H1 (cell line): ENCODE measurements at regions of chr20 and their contacts with region 1.

Region 1: GRCh38 chr20:18019070-18019469 is 38.6 kb downstream of the OVOL2 start:
- DNase-seq: no peak
- H3K4me3 ChIP-seq: no peak overlapping the region
- H3K27ac ChIP-seq: no peak overlapping the region
- H3K4me1 ChIP-seq: no peaks in the 10 kb centered on the region
- H3K27me3 ChIP-seq: no peaks in the 10 kb centered on the region
- CTCF ChIP-seq: peak; percentile 69 to 94 (median 78)
- EP300 ChIP-seq: no peak
- POLR2A ChIP-seq: no peak
- RAD21 ChIP-seq: peak; percentile 67 to 82

Region 2: GRCh38 chr20:18032977-18033892 is 14.2 kb after region 1 on chr20:
- CTCF ChIA-PET with region 1: interaction called, 48 read pairs
- POLR2A ChIA-PET with region 1: interaction called, 3 read pairs
- DNase-seq: no peak
- H3K4me3 ChIP-seq: no peak overlapping the region
- H3K27ac ChIP-seq: no peak overlapping the region
- H3K4me1 ChIP-seq: peaks cover 0 to 5% (median under 1%) of the 10 kb centered on the region in 4 experiments; a peak in 3 of 7 replicates
- H3K27me3 ChIP-seq: no peaks in the 10 kb centered on the region
- CTCF ChIP-seq: peak; percentile 23 to 39 (median 32); a peak in 3 of 4 replicates
- EP300 ChIP-seq: no peak
- POLR2A ChIP-seq: no peak
- RAD21 ChIP-seq: peak; percentile 31; a peak in 3 of 4 replicates

Region 3: DNA sequence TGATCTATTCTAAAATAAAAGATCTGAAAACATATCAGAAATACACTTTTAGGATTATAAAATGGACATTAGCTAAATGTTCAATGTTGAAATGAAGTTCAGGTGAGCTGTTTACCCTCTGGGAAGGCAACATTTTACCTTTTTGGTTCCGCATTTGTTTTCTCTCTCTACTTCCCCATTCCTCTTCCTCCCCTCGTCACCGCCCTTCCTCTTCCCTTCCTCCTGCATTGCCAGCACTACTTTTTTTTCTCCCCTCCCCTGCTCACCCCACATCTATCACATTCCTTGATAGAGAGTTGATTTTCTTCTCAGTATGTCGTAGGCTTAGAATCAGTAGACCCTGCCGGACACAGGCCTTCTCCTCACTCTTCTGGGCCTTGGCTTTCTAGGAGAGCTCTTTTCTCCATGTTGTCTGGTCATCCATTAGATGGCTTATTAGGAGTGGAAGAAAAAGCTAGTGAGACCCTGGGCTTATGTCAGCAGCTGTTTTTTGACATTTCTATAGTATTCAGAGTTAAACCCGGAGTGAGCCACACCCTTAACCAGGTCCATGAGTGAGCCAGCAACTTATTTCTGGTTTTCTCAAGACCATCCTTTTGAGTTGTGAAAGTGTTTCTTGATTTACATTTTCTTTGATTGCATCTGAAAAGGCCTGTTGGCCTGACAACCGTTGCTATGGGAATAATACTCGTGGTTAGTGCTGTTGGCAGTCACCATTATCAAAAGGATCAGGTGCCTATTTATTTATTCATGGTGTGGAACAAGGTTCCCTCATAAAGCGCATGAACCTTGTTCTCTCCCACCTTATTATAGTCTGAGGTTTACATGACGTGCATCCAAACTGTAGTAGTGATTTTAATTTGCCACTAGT is 659.7 kb after region 1 on chr20:
- CTCF ChIA-PET with region 1: no interaction called
- POLR2A ChIA-PET with region 1: no interaction called
- DNase-seq: peak in 1 of 2 experiments; percentile 48
- H3K4me3 ChIP-seq: no peak overlapping the region
- H3K27ac ChIP-seq: no peak overlapping the region
- H3K4me1 ChIP-seq: peaks cover 5 to 12% (median 10%) of the 10 kb centered on the region in 4 experiments; a peak in 6 of 7 replicates
- H3K27me3 ChIP-seq: no peaks in the 10 kb centered on the region
- CTCF ChIP-seq: no peak
- EP300 ChIP-seq: no peak
- POLR2A ChIP-seq: no peak
- RAD21 ChIP-seq: no peak